OCI-LY7 (cell line): ENCODE measurements at regions of chr1 and their contacts with region 1.

Region 1: GRCh38 chr1:227082999-227083746 is 143.1 kb downstream of the COQ8A start:
- DNase-seq: no peak
- H3K4me3 ChIP-seq: no peak overlapping the region
- H3K27ac ChIP-seq: no peak overlapping the region
- H3K4me1 ChIP-seq: no peaks in the 10 kb centered on the region
- CTCF ChIP-seq: no peak

Region 2: DNA sequence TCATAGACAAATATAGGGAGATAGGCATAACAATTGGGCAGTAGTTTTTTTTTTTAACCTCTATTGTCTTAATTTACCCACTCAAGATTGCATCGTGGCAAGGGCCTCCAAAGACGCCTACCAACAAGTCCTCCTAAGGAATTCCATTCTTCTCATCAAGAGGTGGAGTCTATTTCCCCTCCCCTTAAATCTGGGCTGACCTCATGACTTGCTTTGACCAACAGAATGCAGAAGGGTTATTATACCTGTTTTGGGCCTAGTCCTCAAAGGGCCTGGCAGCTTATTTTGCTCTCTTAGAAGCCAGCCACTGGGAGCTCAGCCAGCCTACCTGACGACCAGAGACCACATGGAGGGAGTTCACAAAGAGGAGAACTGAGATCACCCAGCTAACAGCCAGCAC is 50.8 kb before region 1 on chr1:
- CTCF ChIA-PET with region 1: no interaction called
- POLR2A ChIA-PET with region 1: interaction called, 4 read pairs
- intact Hi-C with region 1: loop called (anchors 5 kb)
- DNase-seq: no peak
- H3K4me3 ChIP-seq: no peak overlapping the region
- H3K27ac ChIP-seq: no peak overlapping the region
- H3K4me1 ChIP-seq: no peaks in the 10 kb centered on the region
- CTCF ChIP-seq: no peak